ENCODE measurements at regions of chr1 and their contacts with region 1.

Region 1: GRCh38 chr1:155084722-155085503 is 6.3 kb downstream of the EFNA3 start:
- DNase-seq: peak; percentile 88 to 95 (median 92)
- ATAC-seq: peak; percentile 88
- H3K4me3 ChIP-seq: peak overlapping the region; percentile 59
- H3K27ac ChIP-seq: peak overlapping the region; percentile 72
- H3K4me1 ChIP-seq: peaks cover 28 to 61% of the 10 kb centered on the region in 2 experiments
- H3K27me3 ChIP-seq: peaks cover 3 to 8% of the 10 kb centered on the region in 2 experiments; a peak in 2 of 5 replicates
- CTCF ChIP-seq: peak; percentile 91 to 98 (median 97)
- EP300 ChIP-seq: peak; percentile 19; the same call in 1 of the 2 replicates
- POLR2A ChIP-seq: peak; percentile 36; the same call in 1 of the 2 replicates
- RAD21 ChIP-seq: peak; percentile 99

Region 2: GRCh38 chr1:154961497-154962262 is 123.2 kb before region 1 on chr1 and contains the start of gene PYGO2:
- CTCF ChIA-PET with region 1: no interaction called
- POLR2A ChIA-PET with region 1: no interaction called
- in situ Hi-C with region 1: no loop called
- intact Hi-C with region 1: loop called (anchors 5 kb)
- DNase-seq: peak; percentile 86 to 93 (median 90)
- ATAC-seq: peak; percentile 91
- H3K4me3 ChIP-seq: peak within 1 kb of the TSS; percentile 91
- H3K27ac ChIP-seq: peak within 1 kb of the TSS; percentile 99
- H3K4me1 ChIP-seq: peaks cover 25 to 53% of the 10 kb centered on the region in 2 experiments
- H3K27me3 ChIP-seq: no peaks in the 10 kb centered on the region
- CTCF ChIP-seq: peak; percentile 64 to 86 (median 70)
- EP300 ChIP-seq: no peak
- POLR2A ChIP-seq: peak; percentile 92
- RAD21 ChIP-seq: peak; percentile 74 to 80
- polyA plus RNA-seq, gene PYGO2: 8.3 to 8.6 TPM

Region 3: GRCh38 chr1:155044812-155045690 is 39.9 kb before region 1 on chr1:
- CTCF ChIA-PET with region 1: interaction called, 6 read pairs
- POLR2A ChIA-PET with region 1: interaction called, 3 read pairs
- in situ Hi-C with region 1: no loop called
- intact Hi-C with region 1: loop called (anchors 5 kb)
- DNase-seq: peak; percentile 65 to 81 (median 69)
- ATAC-seq: peak; percentile 93
- H3K4me3 ChIP-seq: no peak overlapping the region
- H3K27ac ChIP-seq: no peak overlapping the region
- H3K4me1 ChIP-seq: peaks cover 17 to 32% of the 10 kb centered on the region in 2 experiments
- H3K27me3 ChIP-seq: no peaks in the 10 kb centered on the region; a peak in 1 of 5 replicates
- CTCF ChIP-seq: peak; percentile 76 to 92 (median 84)
- EP300 ChIP-seq: no peak
- POLR2A ChIP-seq: no peak
- RAD21 ChIP-seq: peak; percentile 74 to 84

Region 4: GRCh38 chr1:155063550-155064110 is 21.3 kb before region 1 on chr1 and contains the start of gene EFNA4:
- CTCF ChIA-PET with region 1: interaction called, 153 read pairs
- POLR2A ChIA-PET with region 1: interaction called, 6 read pairs
- in situ Hi-C with region 1: no loop called
- intact Hi-C with region 1: loop called (anchors 1 kb)
- DNase-seq: peak; percentile 91 to 93 (median 92)
- ATAC-seq: peak; percentile 91
- H3K4me3 ChIP-seq: peak within 1 kb of the TSS; percentile 58
- H3K27ac ChIP-seq: peak within 1 kb of the TSS; percentile 45; the same call in 2 of the 3 replicates
- H3K4me1 ChIP-seq: peaks cover 27 to 58% of the 10 kb centered on the region in 2 experiments
- H3K27me3 ChIP-seq: no peaks in the 10 kb centered on the region
- CTCF ChIP-seq: no peak
- EP300 ChIP-seq: no peak
- POLR2A ChIP-seq: peak; percentile 71
- RAD21 ChIP-seq: no peak
- polyA plus RNA-seq, gene EFNA4: 0.68 to 0.89 TPM

Region 5: GRCh38 chr1:155070721-155071569 is 14.0 kb before region 1 on chr1:
- CTCF ChIA-PET with region 1: interaction called, 5 read pairs
- POLR2A ChIA-PET with region 1: interaction called, 3 read pairs
- in situ Hi-C with region 1: no loop called
- intact Hi-C with region 1: loop called (anchors 2 kb)
- DNase-seq: peak; percentile 86 to 94 (median 87)
- ATAC-seq: peak; percentile 98
- H3K4me3 ChIP-seq: peak overlapping the region; percentile 29
- H3K27ac ChIP-seq: peak overlapping the region; percentile 44
- H3K4me1 ChIP-seq: peaks cover 26 to 47% of the 10 kb centered on the region in 2 experiments
- H3K27me3 ChIP-seq: no peaks in the 10 kb centered on the region
- CTCF ChIP-seq: peak; percentile 60 to 78 (median 62)
- EP300 ChIP-seq: peak; percentile 37; the same call in 1 of the 2 replicates
- POLR2A ChIP-seq: peak; percentile 40; the same call in 1 of the 2 replicates
- RAD21 ChIP-seq: no peak

Region 6: GRCh38 chr1:155167166-155168104 is 82.5 kb after region 1 on chr1:
- CTCF ChIA-PET with region 1: interaction called, 19 read pairs
- POLR2A ChIA-PET with region 1: interaction called, 3 read pairs
- in situ Hi-C with region 1: loop called (anchors 5 kb)
- intact Hi-C with region 1: no loop called
- DNase-seq: peak; percentile 83 to 95 (median 86)
- ATAC-seq: peak; percentile 93
- H3K4me3 ChIP-seq: peak overlapping the region; percentile 13; the same call in 1 of the 2 replicates
- H3K27ac ChIP-seq: no peak overlapping the region; the same call in 2 of the 3 replicates
- H3K4me1 ChIP-seq: peaks cover 10 to 11% of the 10 kb centered on the region in 2 experiments; a peak in 4 of 5 replicates
- H3K27me3 ChIP-seq: no peaks in the 10 kb centered on the region
- CTCF ChIP-seq: peak; percentile 97 to 99 (median 97)
- EP300 ChIP-seq: no peak
- POLR2A ChIP-seq: no peak
- RAD21 ChIP-seq: peak; percentile 98 to 99